ENCODE measurements at regions of chr2 and their contacts with region 1.

Region 1: DNA sequence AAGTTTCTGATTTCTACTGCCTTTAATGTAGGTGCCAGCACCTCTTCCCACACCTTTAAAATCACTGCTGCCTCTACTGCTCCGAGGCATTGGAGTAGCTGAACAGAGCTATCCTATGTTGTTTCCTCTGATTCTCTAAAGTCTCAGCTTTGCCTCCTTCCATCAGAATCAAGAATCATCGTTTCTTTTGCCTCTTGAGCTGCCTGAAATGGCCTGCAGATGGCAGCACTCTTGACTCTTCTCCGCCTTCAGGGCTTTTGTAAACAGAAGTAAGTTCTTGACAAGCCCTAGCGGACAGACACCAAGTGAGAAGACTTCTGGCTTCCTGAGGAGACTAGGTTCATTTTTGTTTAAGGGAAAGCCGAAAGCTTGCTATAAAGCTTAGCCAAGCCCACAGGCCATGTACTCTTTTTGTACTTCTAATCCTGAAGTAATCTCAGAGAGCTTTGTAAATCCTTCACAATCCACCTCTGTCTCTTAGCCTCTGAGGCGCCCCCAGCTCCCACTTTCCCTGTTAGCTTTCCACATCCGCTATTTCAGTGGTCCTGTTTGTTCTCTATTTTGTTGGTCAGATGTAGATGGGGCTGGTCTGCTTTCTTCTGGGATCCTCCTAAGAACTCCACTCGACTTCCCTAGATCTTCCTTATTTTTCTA is 48.4 kb downstream of the GTF3C3 start:
- DNase-seq: peak; percentile 52 to 55 (median 53)
- H3K4me3 ChIP-seq: no peak overlapping the region
- H3K4me3 Mint-ChIP-seq: no peak overlapping the region
- H3K27ac ChIP-seq: no peak overlapping the region
- H3K27ac Mint-ChIP-seq: peak overlapping the region in 3 of 7 donors; percentile 1 to 25 (median 4)
- H3K4me1 ChIP-seq: no peaks in the 10 kb centered on the region
- H3K4me1 Mint-ChIP-seq: peaks cover 6 to 17% (median 9%) of the 10 kb centered on the region in 4 donors
- H3K27me3 ChIP-seq: no peaks in the 10 kb centered on the region
- H3K27me3 Mint-ChIP-seq: peaks cover 0 to 1% of the 10 kb centered on the region in 2 donors

Region 2: DNA sequence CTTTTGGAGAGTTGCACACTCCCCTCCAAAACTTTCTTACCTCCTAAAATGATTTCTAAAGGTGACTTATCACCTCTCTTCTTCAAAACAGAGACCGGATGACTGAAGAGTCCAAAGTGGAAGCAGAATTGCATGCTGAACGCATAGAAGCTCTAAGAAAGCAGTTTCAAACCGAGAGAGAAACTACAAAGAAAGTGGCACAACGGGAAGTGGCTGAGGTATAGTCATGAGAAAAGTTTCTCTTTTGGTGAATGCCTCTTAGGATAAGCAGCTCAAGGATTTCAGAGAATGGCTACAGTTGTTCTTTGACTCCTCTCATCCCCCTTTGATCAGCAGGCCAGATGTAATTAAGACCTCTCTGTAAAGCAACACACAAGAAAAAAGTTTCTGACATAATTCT is 25.2 kb before region 1 on chr2:
- CTCF ChIA-PET with region 1: interaction called, 11 read pairs
- POLR2A ChIA-PET with region 1: no interaction called
- intact Hi-C with region 1: no loop called
- DNase-seq: peak in 2 of 5 donors; percentile 4 to 8
- H3K4me3 ChIP-seq: no peak overlapping the region
- H3K4me3 Mint-ChIP-seq: peak overlapping the region in 3 of 8 donors; percentile 11 to 31 (median 18)
- H3K27ac ChIP-seq: no peak overlapping the region
- H3K27ac Mint-ChIP-seq: peak overlapping the region in 4 of 7 donors; percentile 5 to 71 (median 24)
- H3K4me1 ChIP-seq: peaks cover 3% of the 10 kb centered on the region
- H3K4me1 Mint-ChIP-seq: peaks cover 5 to 10% (median 8%) of the 10 kb centered on the region in 4 donors
- H3K27me3 ChIP-seq: no peaks in the 10 kb centered on the region
- H3K27me3 Mint-ChIP-seq: no peaks in the 10 kb centered on the region

Region 3: DNA sequence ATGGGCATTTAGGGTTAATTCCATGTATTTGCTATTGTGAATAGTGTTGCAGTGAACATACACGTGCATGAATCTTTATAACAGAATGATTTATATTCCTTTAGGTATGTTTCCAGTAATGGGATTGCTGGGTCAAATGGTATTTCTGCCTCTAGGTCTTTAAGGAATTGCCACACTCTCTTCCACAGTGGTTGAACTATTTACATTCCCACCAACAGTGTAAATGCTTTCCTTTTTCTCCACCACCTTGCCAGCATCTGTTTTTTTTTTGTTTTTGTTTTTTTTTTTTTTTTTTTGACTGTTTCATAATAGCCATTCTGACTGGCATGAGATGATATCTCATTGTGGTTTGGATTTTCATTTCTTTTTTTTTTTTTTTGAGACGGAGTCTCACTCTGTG is 14.1 kb before region 1 on chr2:
- CTCF ChIA-PET with region 1: interaction called, 14 read pairs
- POLR2A ChIA-PET with region 1: no interaction called
- intact Hi-C with region 1: no loop called
- DNase-seq: no peak
- H3K4me3 ChIP-seq: no peak overlapping the region
- H3K4me3 Mint-ChIP-seq: no peak overlapping the region
- H3K27ac ChIP-seq: no peak overlapping the region
- H3K27ac Mint-ChIP-seq: no peak overlapping the region
- H3K4me1 ChIP-seq: no peaks in the 10 kb centered on the region
- H3K4me1 Mint-ChIP-seq: no peaks in the 10 kb centered on the region
- H3K27me3 ChIP-seq: no peaks in the 10 kb centered on the region
- H3K27me3 Mint-ChIP-seq: no peaks in the 10 kb centered on the region

Region 4: DNA sequence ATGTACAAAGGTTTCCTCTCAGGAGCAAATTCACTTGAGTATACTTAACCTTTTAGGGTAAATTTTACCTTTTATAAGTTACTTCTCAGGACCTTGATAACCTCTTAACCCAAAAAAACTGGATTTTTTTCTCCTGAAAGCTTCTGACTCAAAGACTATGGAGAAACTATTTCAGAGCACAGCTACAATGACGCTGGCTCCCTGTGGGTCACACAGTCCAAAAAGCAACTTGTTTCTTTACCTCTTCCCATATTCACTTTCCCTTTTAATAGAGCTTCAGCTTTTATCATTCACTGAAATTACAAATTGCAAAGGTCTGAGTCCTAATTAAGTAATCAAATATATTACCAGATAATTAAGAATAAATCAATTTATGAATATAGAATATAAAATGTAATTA is 16.0 kb after region 1 on chr2:
- CTCF ChIA-PET with region 1: interaction called, 15 read pairs
- POLR2A ChIA-PET with region 1: interaction called, 3 read pairs
- intact Hi-C with region 1: no loop called
- DNase-seq: no peak
- H3K4me3 ChIP-seq: no peak overlapping the region
- H3K4me3 Mint-ChIP-seq: no peak overlapping the region
- H3K27ac ChIP-seq: no peak overlapping the region
- H3K27ac Mint-ChIP-seq: no peak overlapping the region
- H3K4me1 ChIP-seq: no peaks in the 10 kb centered on the region
- H3K4me1 Mint-ChIP-seq: no peaks in the 10 kb centered on the region
- H3K27me3 ChIP-seq: no peaks in the 10 kb centered on the region
- H3K27me3 Mint-ChIP-seq: no peaks in the 10 kb centered on the region

Region 5: DNA sequence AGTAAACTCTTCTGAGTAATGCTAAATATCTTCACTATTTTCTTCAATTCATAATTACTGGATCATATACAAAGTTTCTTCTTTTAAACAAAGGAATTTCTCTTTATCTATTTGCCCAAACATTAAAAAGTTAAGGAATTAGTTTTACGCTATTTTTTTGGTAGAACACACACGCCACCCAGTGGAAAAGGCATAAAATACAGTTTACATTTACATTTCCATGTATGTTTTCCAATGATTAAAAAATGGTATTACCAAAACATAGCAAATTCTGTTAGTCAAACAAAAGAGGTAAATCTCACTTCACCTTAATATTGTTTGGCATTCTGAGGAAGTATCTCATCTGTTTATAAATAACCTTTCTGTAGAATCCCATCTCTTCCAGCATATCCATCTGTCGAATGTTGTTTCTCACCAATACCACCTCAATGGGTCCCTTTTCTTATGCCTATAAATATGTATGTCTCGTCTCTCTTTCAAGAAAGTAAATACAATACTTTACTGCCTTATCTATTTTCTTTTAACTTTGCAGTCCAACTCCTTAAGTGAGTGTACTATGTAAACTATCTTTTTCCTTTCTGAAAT is 1026.8 kb after region 1 on chr2:
- CTCF ChIA-PET with region 1: interaction called, 11 read pairs
- POLR2A ChIA-PET with region 1: no interaction called
- intact Hi-C with region 1: no loop called
- DNase-seq: peak in 4 of 5 donors; percentile 32 to 46 (median 40)
- H3K4me3 ChIP-seq: no peak overlapping the region
- H3K4me3 Mint-ChIP-seq: no peak overlapping the region
- H3K27ac ChIP-seq: no peak overlapping the region
- H3K27ac Mint-ChIP-seq: no peak overlapping the region
- H3K4me1 ChIP-seq: no peaks in the 10 kb centered on the region
- H3K4me1 Mint-ChIP-seq: peaks cover 0 to 2% (median 0%) of the 10 kb centered on the region in 4 donors
- H3K27me3 ChIP-seq: no peaks in the 10 kb centered on the region
- H3K27me3 Mint-ChIP-seq: peaks cover 4 to 5% of the 10 kb centered on the region in 2 donors

Measured in CD4-positive, alpha-beta memory T cell (primary cell).